ENCODE measurements at regions of chr4 and their contacts with region 1.

Region 1: DNA sequence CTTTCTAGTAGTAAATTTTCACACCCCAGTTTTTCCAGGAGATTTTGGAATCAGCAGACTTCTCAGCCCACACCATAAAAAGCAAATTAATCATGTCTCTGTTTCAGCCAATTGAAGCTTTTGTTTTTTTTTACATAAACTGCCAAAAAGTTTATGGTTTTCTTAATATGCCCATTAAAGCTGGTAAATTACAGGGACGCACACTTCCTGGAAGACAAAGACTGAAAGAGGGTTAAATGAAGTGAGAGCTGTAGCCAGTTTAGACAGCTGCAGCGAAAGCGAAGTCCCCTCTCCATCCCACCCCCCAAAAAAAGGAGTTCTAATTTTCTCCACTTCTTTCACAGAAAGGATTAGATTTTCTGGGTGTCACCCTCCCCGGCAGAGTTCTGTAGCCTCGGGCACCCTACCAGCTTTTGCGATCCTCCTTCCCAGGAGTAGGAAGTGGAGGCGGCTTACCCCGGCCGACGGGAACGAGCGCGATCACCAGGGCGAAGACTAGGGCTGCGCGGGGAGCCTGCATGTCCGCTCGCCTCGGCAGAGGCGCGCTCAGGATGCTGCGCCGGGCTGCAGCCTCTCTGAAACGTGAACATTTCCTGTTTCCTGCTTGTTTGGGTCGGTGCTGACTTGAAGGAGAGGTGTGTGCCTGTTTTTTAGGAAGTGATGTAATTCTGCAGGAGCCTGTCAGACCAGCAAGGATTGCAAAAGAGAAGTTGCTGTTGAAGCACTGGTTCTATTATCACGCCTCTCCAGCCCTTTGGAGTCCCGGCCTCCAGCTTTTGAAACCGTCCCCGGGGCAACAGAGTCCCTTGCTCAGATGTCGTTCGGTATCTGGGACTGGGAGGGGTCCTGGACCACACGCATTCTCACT is at the start of gene TMEM154:
- DNase-seq: peak; percentile 57 to 85 (median 77)
- ATAC-seq: peak; percentile 95
- H3K4me3 ChIP-seq: peak within 1 kb of the TSS; percentile 81
- H3K4me3 Mint-ChIP-seq: peak within 1 kb of the TSS; percentile 78 to 97 (median 95)
- H3K27ac ChIP-seq: peak within 1 kb of the TSS; percentile 77
- H3K27ac Mint-ChIP-seq: peak within 1 kb of the TSS; percentile 92 to 98 (median 96)
- H3K4me1 ChIP-seq: peaks cover 22% of the 10 kb centered on the region in 2 donors
- H3K4me1 Mint-ChIP-seq: peaks cover 39 to 71% (median 49%) of the 10 kb centered on the region in 7 donors
- H3K27me3 ChIP-seq: no peaks in the 10 kb centered on the region
- H3K27me3 Mint-ChIP-seq: no peaks in the 10 kb centered on the region
- total RNA-seq, gene TMEM154: 21.3 to 46.8 (median 36.9) TPM

Region 2: GRCh38 chr4:151015459-151016347 is 1663.9 kb before region 1 on chr4:
- CTCF ChIA-PET with region 1: no interaction called
- POLR2A ChIA-PET with region 1: interaction called, 3 read pairs
- intact Hi-C with region 1: loop called (anchors 5 to 10 kb)
- DNase-seq: peak; percentile 76 to 89 (median 87)
- ATAC-seq: peak; percentile 88
- H3K4me3 ChIP-seq: peak overlapping the region; percentile 99
- H3K4me3 Mint-ChIP-seq: peak overlapping the region; percentile 95 to 100 (median 99)
- H3K27ac ChIP-seq: peak overlapping the region; percentile 97
- H3K27ac Mint-ChIP-seq: peak overlapping the region; percentile 90 to 100 (median 98)
- H3K4me1 ChIP-seq: peaks cover 18 to 32% of the 10 kb centered on the region in 2 donors
- H3K4me1 Mint-ChIP-seq: peaks cover 20 to 34% (median 32%) of the 10 kb centered on the region in 7 donors
- H3K27me3 ChIP-seq: no peaks in the 10 kb centered on the region
- H3K27me3 Mint-ChIP-seq: no peaks in the 10 kb centered on the region

Region 3: DNA sequence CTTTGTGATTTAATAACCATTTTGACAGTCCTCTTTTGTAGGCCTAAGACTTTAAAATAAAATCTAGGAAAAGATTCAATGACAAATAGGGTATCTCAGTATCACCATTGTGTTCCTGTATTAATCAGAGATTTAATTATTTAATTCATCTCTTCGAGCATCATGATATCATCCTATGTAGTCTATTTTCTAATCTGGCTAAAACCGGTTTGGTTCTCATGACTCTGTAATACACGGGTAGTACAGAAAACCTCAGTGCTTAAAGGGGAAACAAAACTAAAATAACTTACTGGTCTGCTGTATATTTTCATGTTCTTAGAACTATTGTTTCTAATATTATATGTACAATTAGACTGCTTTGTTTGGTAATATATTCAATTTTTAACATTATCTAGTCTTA is 120.0 kb before region 1 on chr4:
- CTCF ChIA-PET with region 1: no interaction called
- POLR2A ChIA-PET with region 1: no interaction called
- intact Hi-C with region 1: loop called in 1 of 2 experiments (anchors 5 kb)
- DNase-seq: no peak
- ATAC-seq: no peak
- H3K4me3 ChIP-seq: no peak overlapping the region
- H3K4me3 Mint-ChIP-seq: no peak overlapping the region
- H3K27ac ChIP-seq: no peak overlapping the region
- H3K27ac Mint-ChIP-seq: no peak overlapping the region
- H3K4me1 ChIP-seq: peaks cover 3 to 5% of the 10 kb centered on the region in 2 donors
- H3K4me1 Mint-ChIP-seq: peaks cover 7 to 35% (median 21%) of the 10 kb centered on the region in 7 donors
- H3K27me3 ChIP-seq: no peaks in the 10 kb centered on the region
- H3K27me3 Mint-ChIP-seq: no peaks in the 10 kb centered on the region

Region 4: DNA sequence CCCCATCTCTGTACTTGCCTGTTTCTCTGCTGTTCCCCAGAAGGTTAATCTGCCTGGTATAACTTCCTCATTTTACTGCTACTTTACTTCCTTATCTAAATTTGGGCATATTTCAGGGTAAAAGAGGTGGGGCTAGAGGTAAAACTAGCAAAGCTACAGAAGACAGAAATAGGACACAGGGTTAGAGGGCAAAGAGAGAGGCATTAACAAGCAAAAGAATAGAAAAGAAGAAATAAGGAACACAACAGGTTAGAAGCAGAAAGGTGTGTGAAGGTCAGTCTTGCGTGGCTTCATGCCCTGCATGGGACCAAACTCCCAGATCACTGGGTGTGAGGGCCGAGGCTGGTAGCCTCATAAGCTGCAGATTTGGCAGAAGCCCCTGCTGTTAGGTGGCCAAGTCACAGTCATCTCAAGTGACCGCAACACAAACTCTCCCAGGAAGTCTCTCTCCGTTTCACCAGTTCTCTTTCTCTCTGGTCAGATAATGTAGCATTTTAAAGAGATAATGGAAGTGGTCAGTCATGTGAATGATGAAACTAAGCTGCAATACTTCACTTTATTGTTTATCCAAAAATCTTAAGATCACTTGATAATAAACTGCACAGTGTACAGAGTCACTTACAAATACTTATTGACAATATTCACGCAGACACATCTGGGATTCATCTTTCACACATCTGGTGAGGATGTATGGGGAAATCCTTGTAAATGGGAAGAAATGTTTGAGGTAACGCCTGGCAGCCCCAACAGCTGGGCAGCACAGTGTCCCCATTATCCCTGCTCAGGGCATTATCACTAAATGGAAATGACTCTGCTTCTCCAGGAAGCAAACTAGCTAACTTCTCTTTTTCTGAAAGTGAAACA is 16.2 kb before region 1 on chr4:
- CTCF ChIA-PET with region 1: no interaction called
- POLR2A ChIA-PET with region 1: interaction called, 4 read pairs
- intact Hi-C with region 1: loop called in 1 of 2 experiments (anchors 2 kb)
- DNase-seq: no peak
- ATAC-seq: peak; percentile 68
- H3K4me3 ChIP-seq: no peak overlapping the region
- H3K4me3 Mint-ChIP-seq: peak overlapping the region in 2 of 10 donors; percentile 16 to 46
- H3K27ac ChIP-seq: no peak overlapping the region
- H3K27ac Mint-ChIP-seq: peak overlapping the region in 6 of 9 donors; percentile 27 to 82 (median 41)
- H3K4me1 ChIP-seq: peaks cover 0 to 4% of the 10 kb centered on the region in 2 donors
- H3K4me1 Mint-ChIP-seq: peaks cover 27 to 51% (median 42%) of the 10 kb centered on the region in 7 donors
- H3K27me3 ChIP-seq: no peaks in the 10 kb centered on the region
- H3K27me3 Mint-ChIP-seq: no peaks in the 10 kb centered on the region

Region 5: GRCh38 chr4:152735396-152735859 is 55.8 kb after region 1 on chr4:
- CTCF ChIA-PET with region 1: interaction called, 4 read pairs
- POLR2A ChIA-PET with region 1: interaction called, 4 read pairs
- intact Hi-C with region 1: loop called (anchors 5 kb)
- DNase-seq: peak in 6 of 9 donors; percentile 2 to 33 (median 26)
- ATAC-seq: peak; percentile 49
- H3K4me3 ChIP-seq: no peak overlapping the region
- H3K4me3 Mint-ChIP-seq: no peak overlapping the region
- H3K27ac ChIP-seq: no peak overlapping the region
- H3K27ac Mint-ChIP-seq: no peak overlapping the region
- H3K4me1 ChIP-seq: no peaks in the 10 kb centered on the region
- H3K4me1 Mint-ChIP-seq: peaks cover 0 to 7% (median 0%) of the 10 kb centered on the region in 7 donors
- H3K27me3 ChIP-seq: no peaks in the 10 kb centered on the region
- H3K27me3 Mint-ChIP-seq: peaks cover 0 to 6% (median 4%) of the 10 kb centered on the region in 5 donors

Region 6: DNA sequence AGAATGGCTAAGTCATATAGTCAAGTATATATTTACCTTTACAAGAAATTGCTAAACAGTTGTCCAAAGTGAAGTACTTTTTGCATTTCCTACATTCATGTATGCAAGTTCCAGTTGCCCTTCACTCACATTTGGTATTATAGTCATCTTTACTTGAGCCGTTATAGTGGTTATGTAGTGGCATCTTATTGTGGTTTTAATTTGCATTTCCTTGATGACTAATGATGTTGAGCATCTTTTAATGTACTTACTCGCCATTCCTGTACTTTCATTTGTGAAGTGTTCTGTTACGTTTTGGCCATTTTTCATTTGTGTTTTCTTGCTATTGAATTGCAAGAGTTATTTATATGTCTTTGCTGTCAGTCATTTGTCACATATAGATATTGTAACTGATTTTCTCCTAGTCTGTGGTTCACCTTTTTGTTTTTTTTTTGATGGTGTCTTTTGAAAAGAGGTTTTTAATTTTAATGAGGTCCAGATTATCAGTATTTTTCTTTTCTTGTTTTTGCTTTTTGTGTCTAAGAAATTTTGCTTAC is 127.7 kb after region 1 on chr4:
- CTCF ChIA-PET with region 1: no interaction called
- POLR2A ChIA-PET with region 1: no interaction called
- intact Hi-C with region 1: no loop called
- DNase-seq: no peak
- ATAC-seq: no peak
- H3K4me3 ChIP-seq: no peak overlapping the region
- H3K4me3 Mint-ChIP-seq: peak overlapping the region in 1 of 10 donors; percentile 52
- H3K27ac ChIP-seq: no peak overlapping the region
- H3K27ac Mint-ChIP-seq: peak overlapping the region in 1 of 9 donors; percentile 58
- H3K4me1 ChIP-seq: no peaks in the 10 kb centered on the region
- H3K4me1 Mint-ChIP-seq: peaks cover 4 to 24% (median 10%) of the 10 kb centered on the region in 7 donors
- H3K27me3 ChIP-seq: no peaks in the 10 kb centered on the region
- H3K27me3 Mint-ChIP-seq: no peaks in the 10 kb centered on the region

Region 7: GRCh38 chr4:153426207-153426885 is 746.7 kb after region 1 on chr4:
- CTCF ChIA-PET with region 1: no interaction called
- POLR2A ChIA-PET with region 1: no interaction called
- intact Hi-C with region 1: no loop called
- DNase-seq: peak in 7 of 9 donors; percentile 68 to 89 (median 82)
- ATAC-seq: peak; percentile 88
- H3K4me3 ChIP-seq: peak overlapping the region; percentile 5
- H3K4me3 Mint-ChIP-seq: peak overlapping the region in 9 of 10 donors; percentile 47 to 80 (median 76)
- H3K27ac ChIP-seq: peak overlapping the region; percentile 79
- H3K27ac Mint-ChIP-seq: peak overlapping the region; percentile 88 to 98 (median 96)
- H3K4me1 ChIP-seq: peaks cover 18 to 57% of the 10 kb centered on the region in 2 donors
- H3K4me1 Mint-ChIP-seq: peaks cover 22 to 69% (median 62%) of the 10 kb centered on the region in 7 donors
- H3K27me3 ChIP-seq: no peaks in the 10 kb centered on the region
- H3K27me3 Mint-ChIP-seq: no peaks in the 10 kb centered on the region

Measured in naive thymus-derived CD4-positive, alpha-beta T cell (primary cell).